Right cardiac atrium (tissue), 5 donors: ENCODE measurements at regions of chr20 and their contacts with region 1.

Region 1: DNA sequence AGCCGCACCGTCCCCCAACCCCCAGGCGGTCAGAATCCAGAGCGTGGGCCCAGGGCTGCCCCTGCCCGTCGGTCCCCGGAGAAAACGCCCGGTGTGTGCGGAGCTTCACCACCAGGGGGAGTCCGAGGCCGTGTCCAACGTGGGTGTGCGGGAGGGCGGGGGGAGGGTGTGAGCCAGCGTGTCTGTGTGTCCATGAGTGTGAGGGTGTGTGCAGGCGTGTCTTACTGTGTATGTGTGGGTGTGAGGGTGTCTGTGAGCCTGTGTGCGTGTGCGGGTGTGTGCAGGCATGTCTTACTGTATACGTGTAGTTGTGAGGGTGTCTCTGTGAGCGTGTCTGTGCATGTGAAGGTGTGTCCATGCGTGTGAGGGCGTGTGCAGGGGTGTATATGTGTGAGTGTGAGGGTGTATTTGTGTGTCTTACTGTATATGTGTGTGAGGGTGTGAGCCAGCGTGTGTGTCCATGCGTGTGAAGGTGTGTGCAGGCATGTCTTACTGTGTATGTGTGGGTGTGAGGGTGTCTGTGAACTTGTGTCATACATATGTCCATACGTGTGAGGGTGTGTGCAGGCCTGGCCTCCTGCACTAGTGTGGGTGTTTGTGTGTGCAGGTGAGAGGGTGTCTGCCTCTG is 24.6 kb upstream of the GATA5 start:
- DNase-seq: peak; percentile 77 to 93 (median 92)
- ATAC-seq: peak; percentile 59 to 68
- H3K4me3 ChIP-seq: no peak overlapping the region
- H3K27ac ChIP-seq: no peak overlapping the region
- H3K4me1 ChIP-seq: no peaks in the 10 kb centered on the region
- H3K27me3 ChIP-seq: no peaks in the 10 kb centered on the region

Region 2: GRCh38 chr20:62437927-62438326 is 62.4 kb before region 1 on chr20:
- intact Hi-C with region 1: no loop called
- DNase-seq: peak in 1 of 3 donors; percentile 72
- ATAC-seq: peak; percentile 5 to 8
- H3K4me3 ChIP-seq: no peak overlapping the region
- H3K27ac ChIP-seq: no peak overlapping the region
- H3K4me1 ChIP-seq: no peaks in the 10 kb centered on the region
- H3K27me3 ChIP-seq: no peaks in the 10 kb centered on the region

Region 3: DNA sequence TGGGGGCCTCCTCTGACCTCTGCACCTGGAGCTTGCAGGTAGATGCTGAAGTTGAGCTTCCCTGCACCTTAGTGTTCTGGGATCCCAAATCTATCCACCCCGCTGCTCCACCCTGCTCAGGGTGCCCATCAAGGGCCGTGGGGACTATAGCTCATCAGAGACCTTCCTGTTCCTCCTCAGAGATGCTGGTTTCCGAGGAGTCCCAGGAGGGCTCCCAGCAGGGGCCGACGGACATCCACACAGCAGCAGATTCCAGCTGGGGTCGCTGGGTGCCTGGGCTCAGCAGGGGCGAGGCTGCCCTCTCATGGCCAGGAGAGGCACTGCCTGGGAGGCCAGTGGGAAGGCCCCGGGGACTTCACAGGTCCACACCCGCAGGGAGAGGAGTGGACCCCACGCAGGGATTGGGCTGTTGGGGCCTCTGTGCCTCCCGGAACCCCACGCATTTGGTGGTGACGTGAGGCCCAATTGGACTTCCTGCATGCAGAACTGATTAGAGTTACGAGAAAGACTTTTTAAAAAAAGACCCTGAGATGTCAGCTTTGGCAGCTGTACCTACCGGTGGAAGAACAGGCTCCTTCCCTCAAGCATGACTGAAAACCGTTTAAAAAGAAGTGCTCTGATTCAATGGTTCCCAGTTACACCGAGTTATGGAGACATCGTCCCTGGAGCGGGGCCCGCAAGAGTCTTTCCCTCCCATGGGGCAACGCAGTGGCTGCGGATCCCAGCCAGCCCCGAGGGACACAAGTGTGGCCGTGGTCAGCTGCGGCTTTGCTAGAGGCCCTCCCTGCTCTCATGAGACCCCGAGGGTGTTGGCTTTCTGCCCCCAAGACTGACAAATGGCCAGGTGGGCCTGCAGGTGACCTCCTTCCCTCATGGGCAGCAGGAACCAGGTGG is 116.6 kb after region 1 on chr20:
- intact Hi-C with region 1: loop called (anchors 5 to 10 kb)
- DNase-seq: peak; percentile 75 to 90 (median 88)
- ATAC-seq: peak; percentile 79 to 82
- H3K4me3 ChIP-seq: no peak overlapping the region
- H3K27ac ChIP-seq: peak overlapping the region; percentile 95
- H3K4me1 ChIP-seq: no peaks in the 10 kb centered on the region
- H3K27me3 ChIP-seq: no peaks in the 10 kb centered on the region

Region 4: DNA sequence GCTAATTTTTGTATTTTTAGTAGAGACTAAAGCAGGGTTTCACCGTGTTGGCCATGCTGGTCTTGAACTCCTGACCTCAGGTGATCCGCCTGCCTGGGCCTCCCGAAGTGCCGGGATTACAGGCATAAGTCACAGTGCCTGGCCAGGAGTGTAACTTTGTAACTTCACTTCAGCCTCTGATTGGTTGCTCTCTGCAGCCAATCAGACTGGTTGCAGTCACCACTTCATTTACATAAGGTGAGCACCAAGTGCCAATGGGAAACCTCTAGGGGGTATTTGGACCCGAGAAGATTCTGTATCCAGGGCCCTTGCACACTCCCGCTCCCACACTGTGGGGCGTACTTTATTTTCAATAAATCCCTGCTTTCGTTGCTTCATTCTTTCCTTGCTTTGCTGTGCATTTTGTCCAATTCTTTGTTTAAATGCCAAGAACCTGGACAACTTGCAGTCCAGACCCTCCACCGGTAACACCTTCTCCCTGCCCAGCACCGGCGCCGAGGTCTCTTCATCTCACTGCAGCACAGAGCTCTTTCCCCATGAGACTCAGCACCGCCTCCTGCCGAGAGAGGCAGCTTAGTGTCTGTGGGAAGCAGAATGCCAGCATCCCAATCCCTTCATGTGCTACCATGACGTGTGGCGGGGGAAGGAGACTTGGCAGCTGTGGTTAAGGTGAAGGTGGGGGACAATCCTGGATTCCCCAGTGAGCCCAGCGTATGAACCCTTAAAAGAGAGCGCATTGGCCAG is 282.0 kb after region 1 on chr20:
- intact Hi-C with region 1: loop called in 3 of 4 experiments (anchors 5 to 10 kb)
- DNase-seq: no peak
- ATAC-seq: no peak
- H3K4me3 ChIP-seq: no peak overlapping the region
- H3K27ac ChIP-seq: no peak overlapping the region
- H3K4me1 ChIP-seq: peaks cover 4% of the 10 kb centered on the region
- H3K27me3 ChIP-seq: no peaks in the 10 kb centered on the region

Region 5: DNA sequence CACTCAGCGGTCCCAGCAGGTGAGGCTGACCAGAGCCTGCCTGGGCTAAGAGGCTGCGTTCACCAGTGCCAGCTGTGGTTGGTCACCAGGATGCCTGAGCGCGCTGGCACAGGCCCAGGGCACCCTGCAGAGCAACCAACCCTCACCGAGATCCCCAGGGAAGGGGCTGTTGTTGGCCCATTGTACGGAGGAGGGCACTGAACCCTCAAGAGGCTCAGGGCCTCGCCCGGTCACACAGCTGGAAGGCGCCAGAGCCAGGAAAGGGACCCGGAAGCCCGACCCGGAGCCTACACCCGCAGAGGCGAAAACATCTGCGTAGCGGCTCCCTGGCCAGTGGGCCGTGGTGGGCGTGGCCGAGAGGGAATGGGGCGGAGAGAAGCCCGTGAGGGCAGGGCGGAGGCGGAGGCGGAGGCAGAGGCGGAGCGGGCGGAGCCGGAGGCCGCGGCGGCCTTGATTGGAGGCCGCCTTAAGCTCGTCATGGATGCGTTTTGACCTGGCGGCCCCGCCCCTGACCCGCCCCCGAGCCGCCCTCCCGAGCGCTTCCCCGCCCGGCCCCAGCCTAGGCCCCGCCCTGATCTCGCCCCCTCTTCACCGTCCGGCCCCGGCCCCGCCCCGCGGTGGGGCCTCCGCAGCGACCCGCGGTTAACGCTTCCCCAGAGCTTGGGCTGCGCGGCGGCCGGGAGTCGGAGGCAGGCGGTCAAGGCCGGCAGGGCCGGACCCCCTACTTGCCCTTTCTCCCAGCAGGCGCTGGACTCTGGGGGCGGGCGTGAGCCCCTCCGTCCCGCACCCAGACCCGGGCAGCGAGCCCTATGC is 293.8 kb after region 1 on chr20:
- intact Hi-C with region 1: loop called (anchors 5 to 10 kb)
- DNase-seq: peak; percentile 97 to 99 (median 99)
- ATAC-seq: peak; percentile 92 to 94
- H3K4me3 ChIP-seq: peak overlapping the region; percentile 33
- H3K27ac ChIP-seq: peak overlapping the region; percentile 93
- H3K4me1 ChIP-seq: peaks cover 7% of the 10 kb centered on the region
- H3K27me3 ChIP-seq: no peaks in the 10 kb centered on the region